ENCODE measurements at regions of chrX and their contacts with region 1.

Region 1: GRCh38 chrX:118058924-118059323 is 57.7 kb downstream of the KLHL13 start:
- DNase-seq: no peak
- H3K4me3 ChIP-seq: no peak overlapping the region
- H3K27ac ChIP-seq: no peak overlapping the region
- H3K4me1 ChIP-seq: no peaks in the 10 kb centered on the region
- H3K27me3 ChIP-seq: no peaks in the 10 kb centered on the region
- CTCF ChIP-seq: no peak
- EP300 ChIP-seq: no peak
- POLR2A ChIP-seq: no peak

Region 2: GRCh38 chrX:118261151-118261550 is 202.2 kb after region 1 on chrX:
- in situ Hi-C with region 1: no loop called
- intact Hi-C with region 1: loop called (anchors 2 kb)
- DNase-seq: no peak
- H3K4me3 ChIP-seq: no peak overlapping the region
- H3K27ac ChIP-seq: no peak overlapping the region
- H3K4me1 ChIP-seq: no peaks in the 10 kb centered on the region
- H3K27me3 ChIP-seq: no peaks in the 10 kb centered on the region
- CTCF ChIP-seq: no peak
- EP300 ChIP-seq: no peak
- POLR2A ChIP-seq: no peak

Region 3: DNA sequence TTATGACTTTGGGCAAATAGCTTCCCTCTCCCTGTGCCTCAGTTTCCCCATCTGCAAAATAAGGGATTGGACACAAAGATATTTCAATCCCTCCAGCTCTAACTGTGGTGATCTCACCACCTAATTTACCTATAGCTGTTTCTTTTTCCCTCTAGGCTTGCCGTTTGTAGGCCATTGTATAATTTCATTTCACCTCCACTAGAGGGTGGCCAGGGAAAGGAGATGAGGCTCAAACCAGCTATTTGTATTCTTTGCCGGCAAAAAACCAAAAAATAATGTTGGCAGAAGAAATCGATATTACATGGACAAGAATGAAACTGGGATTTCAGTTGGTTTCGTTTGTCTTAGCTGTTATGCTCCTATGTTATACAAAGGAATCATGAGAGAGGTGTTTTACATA is 400.6 kb after region 1 on chrX:
- in situ Hi-C with region 1: no loop called
- intact Hi-C with region 1: no loop called
- DNase-seq: no peak
- H3K4me3 ChIP-seq: no peak overlapping the region
- H3K27ac ChIP-seq: no peak overlapping the region
- H3K4me1 ChIP-seq: no peaks in the 10 kb centered on the region
- H3K27me3 ChIP-seq: no peaks in the 10 kb centered on the region
- CTCF ChIP-seq: peak; percentile 28 to 44 (median 36)
- EP300 ChIP-seq: no peak
- POLR2A ChIP-seq: no peak